Endothelial cell of umbilical vein (primary cell): ENCODE measurements at regions of chr16 and their contacts with region 1.

Region 1: GRCh38 chr16:19094541-19095365 is 19.0 kb upstream of the ITPRIPL2 start:
- DNase-seq: no peak
- H3K4me3 ChIP-seq: no peak overlapping the region
- H3K27ac ChIP-seq: no peak overlapping the region
- H3K4me1 ChIP-seq: peaks cover 17% of the 10 kb centered on the region
- H3K27me3 ChIP-seq: no peaks in the 10 kb centered on the region
- CTCF ChIP-seq: no peak
- POLR2A ChIP-seq: no peak

Region 2: DNA sequence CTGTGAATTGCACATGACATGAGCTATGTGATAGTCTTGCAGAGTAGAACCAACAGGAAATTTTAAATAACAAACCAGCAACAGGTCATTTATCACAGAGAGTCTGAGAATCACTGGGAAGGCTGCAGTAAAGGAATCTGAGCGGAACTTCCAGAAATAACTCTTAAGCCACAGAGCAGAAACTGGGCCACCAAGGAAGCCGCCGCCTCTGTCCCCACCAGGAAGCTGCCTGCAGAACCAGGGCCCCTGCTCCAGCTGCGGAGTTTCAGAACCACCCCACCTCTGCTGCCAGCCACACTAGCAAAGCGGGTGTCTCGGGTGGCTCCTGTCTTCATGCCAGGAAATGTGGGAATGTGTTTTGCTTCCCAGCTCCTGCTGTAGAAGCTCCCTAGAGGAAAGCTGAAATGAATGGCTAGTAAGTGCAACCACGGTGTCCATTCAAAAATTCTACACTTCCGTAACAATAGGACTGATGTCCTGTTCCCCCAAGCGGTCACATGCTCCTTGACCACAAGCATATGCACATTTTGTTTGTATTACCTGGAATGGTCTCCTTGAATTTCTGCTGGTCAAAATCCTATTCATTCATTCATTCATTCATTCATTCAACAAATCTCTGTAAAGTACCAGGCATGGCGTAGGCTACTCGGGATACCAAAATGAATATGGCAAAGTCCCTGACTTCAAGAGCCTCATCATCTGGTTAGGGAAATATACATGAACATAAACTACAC is 11.3 kb after region 1 on chr16:
- CTCF ChIA-PET with region 1: interaction called, 20 read pairs
- POLR2A ChIA-PET with region 1: no interaction called
- dilution Hi-C with region 1: no loop called
- intact Hi-C with region 1: loop called (anchors 1 kb)
- DNase-seq: no peak
- H3K4me3 ChIP-seq: no peak overlapping the region
- H3K27ac ChIP-seq: no peak overlapping the region
- H3K4me1 ChIP-seq: peaks cover 15% of the 10 kb centered on the region
- H3K27me3 ChIP-seq: no peaks in the 10 kb centered on the region
- CTCF ChIP-seq: no peak
- POLR2A ChIP-seq: no peak

Region 3: GRCh38 chr16:19130852-19131810 is 36.4 kb after region 1 on chr16:
- CTCF ChIA-PET with region 1: no interaction called
- POLR2A ChIA-PET with region 1: no interaction called
- dilution Hi-C with region 1: no loop called
- intact Hi-C with region 1: loop called (anchors 1 kb)
- DNase-seq: peak; percentile 61
- H3K4me3 ChIP-seq: peak overlapping the region in 2 of 3 experiments; percentile 10 to 43
- H3K27ac ChIP-seq: peak overlapping the region; percentile 99
- H3K4me1 ChIP-seq: peaks cover 22% of the 10 kb centered on the region
- H3K27me3 ChIP-seq: no peaks in the 10 kb centered on the region
- CTCF ChIP-seq: no peak
- POLR2A ChIP-seq: no peak